CD8-positive, alpha-beta memory T cell (primary cell): ENCODE measurements at regions of chr2 and their contacts with region 1.

Region 1: DNA sequence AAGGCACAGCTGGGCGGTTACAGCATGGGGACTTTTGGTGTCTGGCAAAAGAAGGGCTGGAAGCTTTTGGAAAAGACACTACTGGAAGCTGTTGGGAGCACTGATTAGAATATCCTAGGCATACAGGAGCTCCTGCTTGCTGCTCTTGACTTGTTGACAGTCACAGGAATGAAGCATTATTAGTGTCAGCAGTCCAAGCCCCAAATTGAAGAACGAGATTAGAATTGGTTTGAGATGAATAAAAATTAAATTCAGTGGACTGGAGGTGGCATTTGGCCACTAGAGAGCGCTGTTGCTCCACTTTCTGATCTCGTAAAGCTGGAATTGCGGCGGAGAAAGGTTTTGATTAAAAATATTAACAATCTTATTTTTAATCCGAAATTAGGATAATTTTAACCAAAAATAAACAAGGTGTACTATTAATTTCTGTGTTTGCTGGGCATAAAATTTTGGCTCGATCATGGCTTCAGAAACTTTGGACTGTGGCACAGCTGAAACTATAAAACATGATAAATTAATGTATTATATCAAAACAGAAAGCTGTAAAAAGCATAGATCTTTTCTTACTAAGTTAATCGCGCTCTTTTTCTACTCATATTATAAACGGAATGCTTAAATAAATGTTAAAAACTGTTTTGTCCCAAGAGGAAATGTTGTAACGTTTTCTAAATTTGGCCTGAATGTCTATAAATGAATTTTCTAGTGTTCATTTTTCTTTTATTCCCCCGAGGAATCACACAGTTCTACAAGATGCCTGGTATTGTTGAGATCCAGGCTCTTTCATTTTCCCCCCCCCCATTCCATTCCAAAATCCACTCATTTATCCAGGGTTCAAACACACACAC is 2.4 kb upstream of the HOXD8 start:
- DNase-seq: peak; percentile 49 to 72 (median 62)
- H3K4me3 ChIP-seq: no peak overlapping the region
- H3K4me3 Mint-ChIP-seq: peak overlapping the region in 1 of 7 donors; percentile 53
- H3K27ac ChIP-seq: no peak overlapping the region
- H3K27ac Mint-ChIP-seq: peak overlapping the region in 2 of 8 donors; percentile 46 to 87
- H3K4me1 ChIP-seq: peaks cover 16% of the 10 kb centered on the region
- H3K4me1 Mint-ChIP-seq: peaks cover 31 to 49% (median 40%) of the 10 kb centered on the region in 3 donors
- H3K27me3 ChIP-seq: peaks cover 83% of the 10 kb centered on the region
- H3K27me3 Mint-ChIP-seq: peaks cover 76 to 79% of the 10 kb centered on the region in 2 donors

Region 2: DNA sequence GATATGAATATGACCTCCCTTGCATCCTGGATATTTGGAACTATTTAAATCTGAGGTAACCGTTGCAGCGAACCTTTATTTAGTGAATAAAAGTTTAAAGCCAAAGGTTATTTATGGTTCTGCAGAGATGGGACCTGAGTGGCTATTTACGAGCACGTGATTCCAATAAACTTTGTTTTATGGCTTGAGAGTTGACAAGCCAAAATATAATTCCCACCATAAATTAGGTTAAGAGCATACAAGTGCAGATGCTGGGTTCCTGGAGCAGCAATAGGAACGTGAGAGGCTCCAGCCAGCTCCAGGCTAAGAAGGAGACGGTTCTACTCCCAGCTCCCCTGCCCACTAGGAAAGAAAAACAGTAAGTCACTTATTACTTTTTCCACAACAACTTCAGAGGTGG is 18.9 kb after region 1 on chr2:
- CTCF ChIA-PET with region 1: interaction called, 11 read pairs
- POLR2A ChIA-PET with region 1: no interaction called
- DNase-seq: no peak
- H3K4me3 ChIP-seq: no peak overlapping the region
- H3K4me3 Mint-ChIP-seq: no peak overlapping the region
- H3K27ac ChIP-seq: no peak overlapping the region
- H3K27ac Mint-ChIP-seq: no peak overlapping the region
- H3K4me1 ChIP-seq: peaks cover under 1% of the 10 kb centered on the region
- H3K4me1 Mint-ChIP-seq: peaks cover 4 to 14% (median 12%) of the 10 kb centered on the region in 3 donors
- H3K27me3 ChIP-seq: peaks cover 78% of the 10 kb centered on the region
- H3K27me3 Mint-ChIP-seq: peaks cover 81 to 96% of the 10 kb centered on the region in 2 donors

Region 3: DNA sequence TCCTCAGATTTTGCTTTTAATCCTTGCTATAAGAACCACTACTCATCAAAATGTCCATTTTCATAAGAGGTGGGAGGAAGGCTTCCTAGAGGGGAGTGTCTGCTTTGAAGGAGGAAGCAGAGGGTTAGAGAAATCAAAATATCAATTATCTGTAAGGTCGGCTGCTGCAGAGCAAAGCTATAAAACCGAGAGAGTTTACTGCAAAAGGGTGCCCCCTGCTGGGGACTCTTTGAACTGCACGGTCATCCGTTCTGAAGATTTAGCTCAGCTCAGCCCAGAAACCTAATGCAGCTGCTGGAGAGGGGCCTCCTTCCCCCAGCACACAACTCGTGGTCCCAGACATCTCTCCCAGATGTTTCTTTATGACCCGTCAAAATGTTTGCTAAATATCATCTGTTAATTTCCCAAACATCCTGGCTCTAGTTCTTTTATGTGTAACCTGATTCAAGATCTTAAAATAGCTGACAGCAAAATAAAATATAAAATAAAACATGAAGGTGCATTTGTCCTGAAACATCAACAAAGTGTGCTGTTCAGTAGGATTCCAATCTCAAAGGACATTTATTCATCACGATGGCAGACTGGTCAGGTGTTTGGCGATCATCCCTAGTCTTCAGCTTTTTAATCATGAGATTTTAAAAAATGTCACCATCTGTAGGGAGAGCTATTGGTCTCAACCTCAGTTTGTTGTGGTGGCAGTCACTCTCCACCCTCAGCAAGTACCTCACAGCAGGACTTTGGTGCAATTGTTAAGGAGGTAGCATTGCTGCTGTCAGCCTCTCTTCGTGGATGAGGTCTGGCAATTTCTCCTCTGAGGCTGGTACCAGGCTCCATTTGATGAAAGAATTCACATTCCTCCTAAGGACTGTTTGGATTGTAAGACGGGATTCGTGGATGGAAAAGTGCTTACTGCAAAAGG is 328.0 kb after region 1 on chr2:
- CTCF ChIA-PET with region 1: interaction called, 79 read pairs
- POLR2A ChIA-PET with region 1: interaction called, 4 read pairs
- DNase-seq: peak; percentile 52 to 81 (median 66)
- H3K4me3 ChIP-seq: no peak overlapping the region
- H3K4me3 Mint-ChIP-seq: no peak overlapping the region
- H3K27ac ChIP-seq: no peak overlapping the region
- H3K27ac Mint-ChIP-seq: peak overlapping the region in 1 of 8 donors; percentile 32
- H3K4me1 ChIP-seq: no peaks in the 10 kb centered on the region
- H3K4me1 Mint-ChIP-seq: no peaks in the 10 kb centered on the region
- H3K27me3 ChIP-seq: peaks cover 14% of the 10 kb centered on the region
- H3K27me3 Mint-ChIP-seq: peaks cover 29 to 53% of the 10 kb centered on the region in 2 donors

Region 4: GRCh38 chr2:176554101-176555048 is 427.2 kb after region 1 on chr2:
- CTCF ChIA-PET with region 1: interaction called, 15 read pairs
- POLR2A ChIA-PET with region 1: no interaction called
- DNase-seq: peak in 2 of 5 donors; percentile 38 to 63
- H3K4me3 ChIP-seq: peak overlapping the region; percentile 71
- H3K4me3 Mint-ChIP-seq: peak overlapping the region; percentile 67 to 91 (median 85)
- H3K27ac ChIP-seq: no peak overlapping the region
- H3K27ac Mint-ChIP-seq: peak overlapping the region in 3 of 8 donors; percentile 4 to 73 (median 21)
- H3K4me1 ChIP-seq: peaks cover 10% of the 10 kb centered on the region
- H3K4me1 Mint-ChIP-seq: peaks cover 12 to 14% (median 12%) of the 10 kb centered on the region in 3 donors
- H3K27me3 ChIP-seq: peaks cover 16% of the 10 kb centered on the region
- H3K27me3 Mint-ChIP-seq: peaks cover 21 to 67% of the 10 kb centered on the region in 2 donors

Region 5: GRCh38 chr2:176652300-176653182 is 525.4 kb after region 1 on chr2:
- CTCF ChIA-PET with region 1: interaction called, 32 read pairs
- POLR2A ChIA-PET with region 1: no interaction called
- DNase-seq: peak in 2 of 5 donors; percentile 21 to 40
- H3K4me3 ChIP-seq: no peak overlapping the region
- H3K4me3 Mint-ChIP-seq: no peak overlapping the region
- H3K27ac ChIP-seq: no peak overlapping the region
- H3K27ac Mint-ChIP-seq: no peak overlapping the region
- H3K4me1 ChIP-seq: no peaks in the 10 kb centered on the region
- H3K4me1 Mint-ChIP-seq: peaks cover 8 to 18% (median 10%) of the 10 kb centered on the region in 3 donors
- H3K27me3 ChIP-seq: no peaks in the 10 kb centered on the region
- H3K27me3 Mint-ChIP-seq: peaks cover 15 to 52% of the 10 kb centered on the region in 2 donors